Esophagus muscularis mucosa (tissue), 4 donors: ENCODE measurements at regions of chr14 and their contacts with region 1.

Region 1: DNA sequence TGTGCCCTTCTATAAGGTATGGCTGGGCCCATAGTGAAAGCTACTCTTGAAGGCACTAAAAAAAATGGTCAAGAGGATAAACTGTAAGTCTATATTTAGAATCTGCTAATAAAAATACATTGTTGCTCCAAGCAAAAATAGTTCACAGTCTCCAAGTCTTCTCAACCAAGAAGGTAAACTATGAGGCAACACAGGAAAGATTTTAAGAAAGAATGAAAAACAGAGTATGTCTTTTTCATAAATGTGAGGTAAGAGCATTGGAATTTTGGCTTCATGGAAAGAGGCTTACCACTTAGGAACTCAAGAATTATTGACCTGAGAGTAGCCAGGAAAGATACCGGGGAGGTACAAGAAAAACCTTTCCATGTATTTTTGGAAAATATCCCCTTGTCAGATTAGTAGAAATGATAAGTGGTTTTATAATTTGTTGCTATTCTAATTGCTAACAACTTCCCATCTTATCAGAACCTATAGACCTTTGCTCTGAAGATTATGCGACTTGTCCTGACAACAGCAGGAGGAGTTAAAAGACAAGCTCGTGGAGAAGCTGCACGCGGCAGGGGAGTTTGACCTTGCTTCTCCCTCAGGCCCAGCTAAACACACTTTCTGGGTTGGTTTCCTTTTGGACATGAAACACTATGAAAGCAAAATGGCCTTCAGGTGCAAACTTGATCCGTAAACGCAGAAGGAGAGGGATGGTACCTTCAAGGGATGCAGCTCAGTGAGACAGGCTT is 238.1 kb downstream of the FOXN3 start:
- DNase-seq: no peak
- H3K4me3 ChIP-seq: no peak overlapping the region
- H3K27ac ChIP-seq: peak overlapping the region in 2 of 4 donors; percentile 10 to 14
- H3K4me1 ChIP-seq: peaks cover 26 to 35% (median 30%) of the 10 kb centered on the region in 4 donors
- H3K27me3 ChIP-seq: no peaks in the 10 kb centered on the region
- CTCF ChIP-seq: no peak
- EP300 ChIP-seq: no peak
- POLR2A ChIP-seq: no peak

Region 2: GRCh38 chr14:89004166-89004565 is 174.8 kb before region 1 on chr14:
- intact Hi-C with region 1: no loop called
- DNase-seq: no peak
- H3K4me3 ChIP-seq: no peak overlapping the region
- H3K27ac ChIP-seq: no peak overlapping the region
- H3K4me1 ChIP-seq: no peaks in the 10 kb centered on the region
- H3K27me3 ChIP-seq: no peaks in the 10 kb centered on the region
- CTCF ChIP-seq: no peak
- EP300 ChIP-seq: no peak
- POLR2A ChIP-seq: no peak

Region 3: GRCh38 chr14:89214221-89214936 is 35.4 kb after region 1 on chr14:
- intact Hi-C with region 1: no loop called
- DNase-seq: no peak
- H3K4me3 ChIP-seq: no peak overlapping the region
- H3K27ac ChIP-seq: peak overlapping the region; percentile 37 to 55 (median 53)
- H3K4me1 ChIP-seq: peaks cover 20 to 45% (median 30%) of the 10 kb centered on the region in 4 donors
- H3K27me3 ChIP-seq: no peaks in the 10 kb centered on the region
- CTCF ChIP-seq: peak in 2 of 3 experiments; percentile 7 to 34
- EP300 ChIP-seq: no peak
- POLR2A ChIP-seq: no peak

Region 4: DNA sequence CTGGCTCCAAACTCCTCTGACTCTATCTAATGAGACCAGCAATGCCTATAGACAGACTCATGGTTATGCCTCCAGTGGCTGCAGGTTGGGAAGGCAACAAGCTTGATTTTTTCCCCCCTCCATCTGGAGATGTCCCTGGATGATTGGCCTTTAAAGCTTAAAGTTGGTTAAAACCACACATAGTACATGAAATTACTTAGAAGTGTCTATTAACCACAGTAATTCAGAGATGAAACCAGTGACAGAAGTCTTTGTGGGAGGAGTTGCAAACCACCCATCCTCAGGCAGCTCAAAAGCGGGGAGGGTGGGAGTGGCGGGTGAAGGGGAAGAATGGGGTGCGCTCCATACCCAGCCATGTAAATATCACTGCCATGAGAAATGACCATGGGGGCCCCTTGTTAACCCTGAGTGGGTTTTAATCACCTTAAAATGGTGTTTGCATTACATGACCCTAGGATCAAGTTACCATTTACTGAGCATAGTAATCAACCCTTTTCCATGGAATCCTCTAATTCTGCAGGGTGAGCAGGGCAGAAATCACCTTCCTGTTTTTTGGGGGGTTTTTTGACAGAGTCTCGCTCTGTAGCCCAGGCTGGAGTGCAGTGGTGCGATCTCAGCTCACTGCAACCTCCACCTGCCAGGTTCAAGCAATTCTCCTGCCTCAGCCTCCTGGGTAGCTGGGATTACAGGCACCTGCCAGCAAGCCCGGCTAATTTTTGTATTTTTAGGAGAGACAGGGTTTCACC is 104.5 kb after region 1 on chr14:
- intact Hi-C with region 1: no loop called
- DNase-seq: no peak
- H3K4me3 ChIP-seq: no peak overlapping the region
- H3K27ac ChIP-seq: no peak overlapping the region
- H3K4me1 ChIP-seq: no peaks in the 10 kb centered on the region
- H3K27me3 ChIP-seq: no peaks in the 10 kb centered on the region
- CTCF ChIP-seq: no peak
- EP300 ChIP-seq: no peak
- POLR2A ChIP-seq: no peak

Region 5: DNA sequence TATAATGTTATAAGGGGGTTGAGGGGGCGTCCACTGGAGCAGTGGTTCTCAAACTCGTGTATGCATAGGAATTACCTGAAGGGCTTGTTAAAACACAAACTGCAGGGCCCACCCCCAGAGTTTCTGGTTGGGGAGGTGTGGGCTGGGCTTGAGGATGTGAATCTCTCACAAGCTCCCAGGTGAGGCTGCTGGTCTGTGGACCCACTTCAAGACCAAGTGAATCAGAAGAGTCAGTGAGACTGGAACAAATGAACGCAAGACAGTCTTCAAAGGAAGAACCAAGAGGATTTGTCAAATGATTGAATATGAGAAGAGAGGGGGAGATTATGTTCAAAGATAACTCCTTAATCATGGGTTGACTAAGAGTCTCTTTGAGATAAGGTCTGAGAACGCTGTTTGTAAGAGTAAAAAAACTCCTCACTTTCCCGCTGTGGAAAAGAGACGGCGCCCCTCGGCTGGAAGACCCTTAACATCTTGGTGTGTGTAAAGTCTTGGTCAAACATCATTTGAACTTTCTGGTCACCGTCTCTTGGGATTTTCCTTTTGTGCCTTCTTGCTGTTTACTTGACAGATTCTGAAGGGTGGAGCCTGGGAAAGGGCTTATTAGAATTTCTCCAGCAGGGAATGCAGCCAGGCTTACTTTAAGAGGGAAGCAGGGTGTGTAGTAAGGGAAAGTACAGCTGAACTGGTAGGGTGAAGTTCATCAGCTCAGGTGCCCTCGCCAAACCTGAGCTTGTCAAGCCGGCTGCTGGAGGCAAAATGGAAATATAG is 243.4 kb after region 1 on chr14:
- intact Hi-C with region 1: loop called (anchors 5 kb)
- DNase-seq: no peak
- H3K4me3 ChIP-seq: no peak overlapping the region
- H3K27ac ChIP-seq: no peak overlapping the region
- H3K4me1 ChIP-seq: peaks cover 28 to 38% (median 32%) of the 10 kb centered on the region in 4 donors
- H3K27me3 ChIP-seq: no peaks in the 10 kb centered on the region
- CTCF ChIP-seq: no peak
- EP300 ChIP-seq: no peak
- POLR2A ChIP-seq: no peak

Region 6: DNA sequence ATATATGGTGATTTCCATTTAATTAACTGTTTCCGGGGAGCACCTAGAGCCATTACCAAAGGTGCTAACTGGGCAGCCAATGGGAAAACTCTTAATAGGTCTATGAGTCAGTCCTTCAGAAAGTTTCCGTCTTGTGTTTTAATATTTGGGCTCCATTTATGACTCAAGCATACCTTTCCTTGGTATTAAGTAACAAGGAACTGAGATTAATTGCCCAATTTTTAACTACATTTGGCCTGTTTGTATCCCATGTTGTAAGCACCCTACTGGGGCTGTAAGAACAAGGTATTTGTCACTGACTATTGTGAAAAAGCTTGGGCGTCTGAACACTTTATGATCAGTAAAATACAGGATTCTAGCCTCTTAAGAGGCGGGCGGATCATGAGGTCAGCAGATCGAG is 300.8 kb after region 1 on chr14:
- intact Hi-C with region 1: no loop called
- DNase-seq: no peak
- H3K4me3 ChIP-seq: no peak overlapping the region
- H3K27ac ChIP-seq: no peak overlapping the region
- H3K4me1 ChIP-seq: no peaks in the 10 kb centered on the region
- H3K27me3 ChIP-seq: no peaks in the 10 kb centered on the region
- CTCF ChIP-seq: no peak
- EP300 ChIP-seq: no peak
- POLR2A ChIP-seq: no peak